Natural killer cell (primary cell): ENCODE measurements at regions of chr6 and their contacts with region 1.

Region 1: DNA sequence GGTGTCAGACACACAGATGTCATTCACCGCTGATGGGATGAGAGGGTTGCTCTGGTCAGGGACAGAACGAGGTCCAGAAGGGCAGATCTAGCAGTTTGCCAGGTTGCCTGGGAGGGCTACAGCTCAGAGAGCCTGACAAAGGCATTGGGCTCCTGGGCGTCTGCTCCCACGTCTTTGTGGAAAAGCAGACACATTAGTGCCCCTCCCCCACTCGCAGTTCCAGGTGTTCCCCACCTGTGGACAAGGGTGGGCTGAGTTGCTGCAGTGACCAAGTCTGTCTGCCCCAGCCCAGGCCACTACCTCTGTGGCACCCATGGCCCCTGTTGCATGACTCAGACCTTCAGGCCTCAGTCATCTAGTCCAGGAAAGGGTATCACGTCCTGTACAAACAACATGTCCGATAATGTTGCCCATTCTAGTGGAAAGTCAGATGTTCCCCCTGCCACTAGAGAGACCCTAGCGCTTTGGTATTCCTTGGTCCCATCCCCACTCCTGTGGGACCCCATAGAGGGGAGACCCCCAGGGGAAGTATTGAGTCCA is 37.4 kb downstream of the WRNIP1 start:
- DNase-seq: no peak
- ATAC-seq: no peak
- H3K4me3 ChIP-seq: no peak overlapping the region
- H3K4me3 Mint-ChIP-seq: no peak overlapping the region
- H3K27ac ChIP-seq: no peak overlapping the region
- H3K27ac Mint-ChIP-seq: no peak overlapping the region
- H3K4me1 ChIP-seq: peaks cover 30% of the 10 kb centered on the region
- H3K4me1 Mint-ChIP-seq: peaks cover 29 to 42% of the 10 kb centered on the region in 2 donors
- H3K27me3 ChIP-seq: no peaks in the 10 kb centered on the region
- H3K27me3 Mint-ChIP-seq: no peaks in the 10 kb centered on the region
- CTCF ChIP-seq: no peak

Region 2: DNA sequence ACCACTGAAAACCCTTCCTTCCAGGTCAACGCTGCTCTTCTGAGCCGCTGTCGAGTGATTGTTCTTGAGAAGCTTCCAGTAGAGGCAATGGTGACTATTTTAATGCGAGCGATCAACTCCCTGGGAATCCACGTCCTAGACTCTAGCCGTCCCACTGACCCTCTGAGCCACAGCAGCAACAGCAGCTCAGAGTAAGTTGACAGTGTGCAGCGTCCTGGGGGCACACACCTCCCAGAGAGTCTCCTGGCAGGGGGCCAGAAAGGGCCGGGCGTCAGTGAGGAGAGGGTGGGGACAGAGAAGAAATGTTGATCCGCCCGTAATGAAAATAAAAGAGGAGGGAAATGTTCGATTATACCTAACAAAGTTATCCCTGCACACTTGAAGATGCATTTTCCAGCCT is 32.4 kb before region 1 on chr6:
- intact Hi-C with region 1: no loop called
- DNase-seq: no peak
- ATAC-seq: no peak
- H3K4me3 ChIP-seq: no peak overlapping the region
- H3K4me3 Mint-ChIP-seq: no peak overlapping the region
- H3K27ac ChIP-seq: no peak overlapping the region
- H3K27ac Mint-ChIP-seq: peak overlapping the region in 1 of 2 donors; percentile 24
- H3K4me1 ChIP-seq: peaks cover 17% of the 10 kb centered on the region
- H3K4me1 Mint-ChIP-seq: peaks cover 50 to 58% of the 10 kb centered on the region in 2 donors
- H3K27me3 ChIP-seq: no peaks in the 10 kb centered on the region
- H3K27me3 Mint-ChIP-seq: no peaks in the 10 kb centered on the region
- CTCF ChIP-seq: no peak

Region 3: GRCh38 chr6:2834262-2834661 is 31.7 kb after region 1 on chr6:
- intact Hi-C with region 1: loop called (anchors 2 kb)
- DNase-seq: no peak
- ATAC-seq: no peak
- H3K4me3 ChIP-seq: no peak overlapping the region
- H3K4me3 Mint-ChIP-seq: no peak overlapping the region
- H3K27ac ChIP-seq: no peak overlapping the region
- H3K27ac Mint-ChIP-seq: peak overlapping the region; percentile 61 to 69
- H3K4me1 ChIP-seq: peaks cover under 1% of the 10 kb centered on the region
- H3K4me1 Mint-ChIP-seq: peaks cover 36 to 55% of the 10 kb centered on the region in 2 donors
- H3K27me3 ChIP-seq: no peaks in the 10 kb centered on the region
- H3K27me3 Mint-ChIP-seq: no peaks in the 10 kb centered on the region
- CTCF ChIP-seq: no peak